ENCODE measurements at regions of chr9 and their contacts with region 1.

Region 1: GRCh38 chr9:21812946-21813568 is 10.6 kb downstream of the MTAP start:
- DNase-seq: peak; percentile 79
- H3K4me3 Mint-ChIP-seq: no peak overlapping the region
- H3K27ac Mint-ChIP-seq: no peak overlapping the region
- H3K4me1 Mint-ChIP-seq: peaks cover 49% of the 10 kb centered on the region
- H3K27me3 Mint-ChIP-seq: no peaks in the 10 kb centered on the region

Region 2: GRCh38 chr9:21770877-21771560 is 42.0 kb before region 1 on chr9:
- CTCF ChIA-PET with region 1: no interaction called
- POLR2A ChIA-PET with region 1: no interaction called
- intact Hi-C with region 1: no loop called
- DNase-seq: no peak
- H3K4me3 Mint-ChIP-seq: no peak overlapping the region
- H3K27ac Mint-ChIP-seq: no peak overlapping the region
- H3K4me1 Mint-ChIP-seq: peaks cover 14% of the 10 kb centered on the region
- H3K27me3 Mint-ChIP-seq: peaks cover 22% of the 10 kb centered on the region

Region 3: DNA sequence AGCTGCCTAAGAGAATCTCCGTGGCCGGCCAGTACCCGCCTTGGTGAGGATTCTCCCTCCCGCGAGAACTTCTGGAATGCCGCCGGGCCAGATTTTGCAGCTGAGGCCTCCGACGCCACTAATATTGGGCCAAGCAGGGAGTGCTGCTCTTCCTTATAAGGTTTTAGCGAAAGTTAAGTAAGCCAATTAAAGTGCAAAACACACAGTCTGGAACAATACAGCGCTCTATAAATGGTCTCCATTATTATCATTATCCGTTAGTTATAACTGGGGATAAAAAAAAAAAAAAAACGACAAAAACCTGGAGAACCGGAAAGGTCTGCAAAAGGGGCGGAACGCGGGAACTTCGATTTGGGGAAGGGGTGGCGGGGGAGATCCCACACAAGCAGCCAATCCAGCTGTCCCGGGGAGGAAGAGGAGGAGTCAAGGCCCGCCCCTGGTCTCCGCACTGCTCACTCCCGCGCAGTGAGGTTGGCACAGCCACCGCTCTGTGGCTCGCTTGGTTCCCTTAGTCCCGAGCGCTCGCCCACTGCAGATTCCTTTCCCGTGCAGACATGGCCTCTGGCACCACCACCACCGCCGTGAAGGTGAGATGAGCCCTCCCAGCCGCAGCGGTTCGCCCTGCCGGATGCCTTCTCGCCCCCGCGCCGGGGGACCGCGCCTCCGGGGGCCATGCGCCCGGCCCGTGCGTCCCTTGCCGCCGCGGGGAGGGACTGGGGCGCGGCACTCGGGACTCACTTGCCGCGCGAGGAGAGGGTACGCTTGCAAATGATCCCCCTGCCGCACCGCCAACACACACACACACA is 10.7 kb before region 1 on chr9 and contains the start of gene MTAP:
- CTCF ChIA-PET with region 1: interaction called, 25 read pairs
- POLR2A ChIA-PET with region 1: interaction called, 8 read pairs
- intact Hi-C with region 1: no loop called
- DNase-seq: peak; percentile 83
- H3K4me3 Mint-ChIP-seq: peak within 1 kb of the TSS; percentile 98
- H3K27ac Mint-ChIP-seq: peak within 1 kb of the TSS; percentile 99
- H3K4me1 Mint-ChIP-seq: peaks cover 39% of the 10 kb centered on the region
- H3K27me3 Mint-ChIP-seq: peaks cover 7% of the 10 kb centered on the region
- total RNA-seq, gene MTAP: 55.6 to 62.3 TPM

Region 4: GRCh38 chr9:21890696-21891095 is 77.6 kb after region 1 on chr9:
- CTCF ChIA-PET with region 1: no interaction called
- POLR2A ChIA-PET with region 1: no interaction called
- intact Hi-C with region 1: no loop called
- DNase-seq: no peak
- H3K4me3 Mint-ChIP-seq: no peak overlapping the region
- H3K27ac Mint-ChIP-seq: no peak overlapping the region
- H3K4me1 Mint-ChIP-seq: no peaks in the 10 kb centered on the region
- H3K27me3 Mint-ChIP-seq: no peaks in the 10 kb centered on the region

Region 5: DNA sequence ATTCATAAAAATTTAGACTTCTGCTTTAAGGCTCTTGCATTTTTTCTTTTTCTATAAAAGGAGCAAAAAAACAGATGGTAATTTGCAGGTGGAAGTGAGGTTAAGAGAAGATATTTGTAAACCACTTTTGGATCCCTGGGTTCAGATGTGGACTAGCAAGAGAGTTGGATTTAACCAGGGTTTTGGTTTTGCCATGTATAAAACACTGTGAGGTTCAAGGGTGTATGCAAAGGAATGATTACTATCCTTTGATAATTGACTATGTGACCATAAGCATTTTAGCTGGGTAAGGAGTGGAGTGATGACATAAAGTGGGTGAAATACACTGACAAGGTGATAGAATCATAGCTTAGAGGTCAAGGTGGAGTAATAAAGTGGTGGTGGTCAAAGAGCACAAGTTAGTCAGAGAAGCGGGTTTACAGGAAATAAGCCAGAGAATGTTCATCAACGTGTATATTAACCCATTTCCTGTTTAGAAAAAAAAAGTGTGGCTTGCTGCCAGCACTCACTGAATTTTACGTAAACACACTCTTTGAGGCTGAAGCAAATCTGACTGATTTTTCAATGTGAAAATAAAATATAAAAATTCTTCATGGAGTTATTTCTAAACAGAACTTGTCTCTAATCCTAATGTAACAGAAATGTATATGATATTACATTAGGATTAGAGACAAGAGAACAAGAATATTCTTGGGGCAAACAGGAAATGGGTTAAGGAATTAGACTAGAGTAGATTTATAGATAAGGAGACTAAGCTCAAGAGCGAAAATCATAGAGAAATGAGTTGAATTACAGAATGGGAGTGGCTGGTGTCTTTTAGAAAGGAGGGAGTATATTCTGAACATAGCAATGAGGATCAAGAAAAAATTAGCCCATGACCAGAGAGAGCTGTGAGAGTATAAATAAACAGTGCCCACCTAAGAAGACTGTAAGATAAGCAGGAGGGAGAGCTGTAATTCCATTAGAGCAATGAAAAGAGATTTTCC is 106.6 kb after region 1 on chr9:
- CTCF ChIA-PET with region 1: no interaction called
- POLR2A ChIA-PET with region 1: no interaction called
- intact Hi-C with region 1: loop called (anchors 5 kb)
- DNase-seq: peak; percentile 11
- H3K4me3 Mint-ChIP-seq: no peak overlapping the region
- H3K27ac Mint-ChIP-seq: peak overlapping the region; percentile 44
- H3K4me1 Mint-ChIP-seq: peaks cover 20% of the 10 kb centered on the region
- H3K27me3 Mint-ChIP-seq: no peaks in the 10 kb centered on the region

Region 6: DNA sequence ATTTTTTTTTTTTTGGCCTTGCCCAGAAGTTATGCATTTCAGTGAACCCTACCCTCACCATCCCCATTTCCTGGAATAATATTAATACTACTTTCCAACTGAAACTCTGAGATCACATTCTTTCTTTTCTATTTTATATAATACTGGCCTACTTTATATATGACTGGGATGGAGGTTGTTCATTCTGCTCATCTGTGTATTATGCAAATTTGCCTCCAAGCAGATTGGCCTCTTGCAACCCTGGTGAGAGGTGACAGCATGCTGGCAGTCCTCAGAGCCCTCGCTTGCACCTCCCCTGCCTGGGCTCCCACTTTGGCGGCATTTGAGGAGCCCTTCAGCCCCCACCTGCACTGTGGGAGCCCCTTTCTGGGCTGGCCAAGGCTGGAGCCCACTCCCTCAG is 145.8 kb after region 1 on chr9:
- CTCF ChIA-PET with region 1: no interaction called
- POLR2A ChIA-PET with region 1: no interaction called
- intact Hi-C with region 1: no loop called
- DNase-seq: no peak
- H3K4me3 Mint-ChIP-seq: no peak overlapping the region
- H3K27ac Mint-ChIP-seq: no peak overlapping the region
- H3K4me1 Mint-ChIP-seq: no peaks in the 10 kb centered on the region
- H3K27me3 Mint-ChIP-seq: peaks cover 32% of the 10 kb centered on the region

Region 7: GRCh38 chr9:21985964-21986667 is 173.1 kb after region 1 on chr9:
- CTCF ChIA-PET with region 1: interaction called, 16 read pairs
- POLR2A ChIA-PET with region 1: no interaction called
- intact Hi-C with region 1: no loop called
- DNase-seq: no peak
- H3K4me3 Mint-ChIP-seq: no peak overlapping the region
- H3K27ac Mint-ChIP-seq: no peak overlapping the region
- H3K4me1 Mint-ChIP-seq: peaks cover 2% of the 10 kb centered on the region
- H3K27me3 Mint-ChIP-seq: peaks cover 40% of the 10 kb centered on the region

Region 8: GRCh38 chr9:22037954-22038690 is 225.1 kb after region 1 on chr9:
- CTCF ChIA-PET with region 1: interaction called, 115 read pairs
- POLR2A ChIA-PET with region 1: no interaction called
- intact Hi-C with region 1: loop called (anchors 1 kb)
- DNase-seq: no peak
- H3K4me3 Mint-ChIP-seq: no peak overlapping the region
- H3K27ac Mint-ChIP-seq: no peak overlapping the region
- H3K4me1 Mint-ChIP-seq: peaks cover 16% of the 10 kb centered on the region
- H3K27me3 Mint-ChIP-seq: peaks cover 7% of the 10 kb centered on the region

Region 9: GRCh38 chr9:22119537-22120158 is 306.6 kb after region 1 on chr9:
- CTCF ChIA-PET with region 1: interaction called, 72 read pairs
- POLR2A ChIA-PET with region 1: no interaction called
- intact Hi-C with region 1: loop called (anchors 1 kb)
- DNase-seq: peak; percentile 15
- H3K4me3 Mint-ChIP-seq: no peak overlapping the region
- H3K27ac Mint-ChIP-seq: no peak overlapping the region
- H3K4me1 Mint-ChIP-seq: no peaks in the 10 kb centered on the region
- H3K27me3 Mint-ChIP-seq: peaks cover 21% of the 10 kb centered on the region

Region 10: GRCh38 chr9:22452415-22453010 is 639.5 kb after region 1 on chr9:
- CTCF ChIA-PET with region 1: interaction called, 34 read pairs
- POLR2A ChIA-PET with region 1: no interaction called
- intact Hi-C with region 1: loop called (anchors 1 kb)
- DNase-seq: peak; percentile 60
- H3K4me3 Mint-ChIP-seq: no peak overlapping the region
- H3K27ac Mint-ChIP-seq: no peak overlapping the region
- H3K4me1 Mint-ChIP-seq: peaks cover 6% of the 10 kb centered on the region
- H3K27me3 Mint-ChIP-seq: peaks cover 26% of the 10 kb centered on the region

Measured in activated CD4-positive, alpha-beta memory T cell treated with anti-CD3 and anti-CD28 coated beads for 36 hours (primary cell).